CD4-positive, alpha-beta memory T cell (primary cell): ENCODE measurements at regions of chr10 and their contacts with region 1.

Region 1: DNA sequence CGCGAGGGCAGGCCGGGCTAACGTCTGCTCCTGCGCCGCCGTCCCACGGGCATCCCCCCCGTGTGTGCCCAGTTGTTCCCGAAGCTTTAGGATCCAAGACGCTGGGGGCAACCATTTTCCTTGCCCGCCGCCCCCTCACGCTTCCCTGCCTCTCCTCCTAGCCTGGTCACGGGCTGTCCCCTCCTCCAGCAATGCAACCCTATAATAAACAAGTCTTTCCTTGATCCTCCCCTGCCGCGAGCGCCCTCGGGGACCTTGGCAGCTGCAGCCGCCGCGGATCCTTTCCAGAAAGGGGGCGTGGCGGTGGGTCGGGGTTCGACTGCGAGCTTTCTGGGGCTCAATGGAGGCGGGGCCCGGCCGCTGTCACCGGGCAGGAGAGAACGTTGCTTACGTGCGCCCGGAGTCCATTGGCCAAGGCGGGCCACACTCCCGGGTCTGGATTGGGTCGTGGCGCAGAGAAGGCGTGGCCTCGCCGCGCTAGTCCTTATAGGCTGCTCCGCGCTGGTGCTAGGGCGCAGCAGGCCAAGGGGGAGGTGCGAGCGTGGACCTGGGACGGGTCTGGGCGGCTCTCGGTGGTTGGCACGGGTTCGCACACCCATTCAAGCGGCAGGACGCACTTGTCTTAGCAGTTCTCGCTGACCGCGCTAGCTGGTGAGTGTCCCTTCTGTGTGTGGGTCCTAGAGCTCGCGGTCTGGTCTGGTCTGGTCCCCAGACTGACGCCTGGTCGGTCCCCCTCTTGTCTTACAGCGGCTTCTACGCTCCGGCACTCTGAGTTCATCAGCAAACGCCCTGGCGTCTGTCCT is at the start of gene DDIT4:
- DNase-seq: peak; percentile 95 to 98 (median 96)
- H3K4me3 ChIP-seq: peak within 1 kb of the TSS; percentile 99 to 100
- H3K4me3 Mint-ChIP-seq: peak within 1 kb of the TSS; percentile 96 to 100 (median 98)
- H3K27ac ChIP-seq: peak within 1 kb of the TSS; percentile 99
- H3K27ac Mint-ChIP-seq: peak within 1 kb of the TSS; percentile 83 to 99 (median 96)
- H3K4me1 ChIP-seq: peaks cover 51% of the 10 kb centered on the region
- H3K4me1 Mint-ChIP-seq: peaks cover 23 to 60% (median 39%) of the 10 kb centered on the region in 4 donors
- H3K27me3 ChIP-seq: no peaks in the 10 kb centered on the region
- H3K27me3 Mint-ChIP-seq: no peaks in the 10 kb centered on the region
- total RNA-seq, gene DDIT4: 23.1 to 24.5 TPM

Region 2: GRCh38 chr10:72248468-72249151 is 25.0 kb before region 1 on chr10:
- CTCF ChIA-PET with region 1: interaction called, 16 read pairs
- POLR2A ChIA-PET with region 1: interaction called, 161 read pairs
- intact Hi-C with region 1: loop called (anchors 1 kb)
- DNase-seq: peak; percentile 85 to 90 (median 87)
- H3K4me3 ChIP-seq: peak overlapping the region; percentile 31 to 33
- H3K4me3 Mint-ChIP-seq: peak overlapping the region; percentile 83 to 92 (median 86)
- H3K27ac ChIP-seq: peak overlapping the region; percentile 55
- H3K27ac Mint-ChIP-seq: peak overlapping the region; percentile 95 to 98 (median 96)
- H3K4me1 ChIP-seq: peaks cover 96% of the 10 kb centered on the region
- H3K4me1 Mint-ChIP-seq: peaks cover 58 to 91% (median 77%) of the 10 kb centered on the region in 4 donors
- H3K27me3 ChIP-seq: no peaks in the 10 kb centered on the region
- H3K27me3 Mint-ChIP-seq: no peaks in the 10 kb centered on the region

Region 3: GRCh38 chr10:72260588-72261322 is 12.9 kb before region 1 on chr10:
- CTCF ChIA-PET with region 1: interaction called, 38 read pairs
- POLR2A ChIA-PET with region 1: interaction called, 161 read pairs
- intact Hi-C with region 1: loop called (anchors 1 kb)
- DNase-seq: peak; percentile 77 to 92 (median 80)
- H3K4me3 ChIP-seq: peak overlapping the region; percentile 52 to 90
- H3K4me3 Mint-ChIP-seq: peak overlapping the region; percentile 84 to 93 (median 89)
- H3K27ac ChIP-seq: peak overlapping the region; percentile 74
- H3K27ac Mint-ChIP-seq: peak overlapping the region; percentile 95 to 98 (median 96)
- H3K4me1 ChIP-seq: peaks cover 89% of the 10 kb centered on the region
- H3K4me1 Mint-ChIP-seq: peaks cover 49 to 77% (median 63%) of the 10 kb centered on the region in 4 donors
- H3K27me3 ChIP-seq: no peaks in the 10 kb centered on the region
- H3K27me3 Mint-ChIP-seq: no peaks in the 10 kb centered on the region

Region 4: GRCh38 chr10:72292223-72292691 is 18.6 kb after region 1 on chr10:
- CTCF ChIA-PET with region 1: interaction called, 26 read pairs
- POLR2A ChIA-PET with region 1: interaction called, 104 read pairs
- intact Hi-C with region 1: loop called (anchors 1 kb)
- DNase-seq: peak in 2 of 5 donors; percentile 9 to 57
- H3K4me3 ChIP-seq: no peak overlapping the region
- H3K4me3 Mint-ChIP-seq: peak overlapping the region in 6 of 8 donors; percentile 7 to 70 (median 34)
- H3K27ac ChIP-seq: no peak overlapping the region
- H3K27ac Mint-ChIP-seq: peak overlapping the region; percentile 75 to 99 (median 88)
- H3K4me1 ChIP-seq: peaks cover 66% of the 10 kb centered on the region
- H3K4me1 Mint-ChIP-seq: peaks cover 41 to 67% (median 57%) of the 10 kb centered on the region in 4 donors
- H3K27me3 ChIP-seq: no peaks in the 10 kb centered on the region
- H3K27me3 Mint-ChIP-seq: no peaks in the 10 kb centered on the region

Region 5: DNA sequence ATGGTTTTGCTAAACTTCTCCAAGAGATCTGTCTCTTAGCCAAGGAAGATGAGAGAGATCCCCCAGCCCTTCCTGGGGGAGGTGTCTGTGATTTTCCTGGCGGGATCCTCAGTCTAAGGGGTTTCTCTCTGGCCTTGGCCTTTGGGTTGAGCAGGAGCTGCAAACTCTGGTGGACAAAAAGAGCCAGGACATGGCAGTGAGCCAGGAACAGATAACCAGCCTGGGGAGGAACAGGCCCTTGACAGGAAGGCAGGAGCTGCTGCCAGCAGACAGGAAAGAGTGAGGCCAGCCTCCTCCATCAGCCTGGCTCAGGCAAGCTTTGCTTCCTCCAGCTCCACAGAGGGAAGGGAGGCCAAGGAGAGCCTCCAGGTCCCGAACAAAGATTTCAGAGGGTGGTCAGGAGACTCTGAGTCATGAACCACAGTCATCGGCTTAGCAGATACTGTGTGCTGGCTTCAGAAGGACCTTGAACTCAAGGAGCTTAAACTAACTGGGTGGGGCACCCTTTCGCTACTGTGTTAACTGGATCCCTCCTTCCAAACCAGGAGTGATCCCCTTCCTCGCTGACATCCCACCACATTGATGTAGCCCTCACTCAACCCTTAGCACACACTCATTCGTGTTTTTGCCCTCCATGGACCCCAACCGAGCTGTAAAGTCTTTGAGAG is 34.8 kb after region 1 on chr10:
- CTCF ChIA-PET with region 1: interaction called, 6 read pairs
- POLR2A ChIA-PET with region 1: interaction called, 17 read pairs
- intact Hi-C with region 1: no loop called
- DNase-seq: no peak
- H3K4me3 ChIP-seq: no peak overlapping the region
- H3K4me3 Mint-ChIP-seq: peak overlapping the region in 3 of 8 donors; percentile 7 to 21 (median 12)
- H3K27ac ChIP-seq: no peak overlapping the region
- H3K27ac Mint-ChIP-seq: peak overlapping the region; percentile 58 to 88 (median 67)
- H3K4me1 ChIP-seq: peaks cover 65% of the 10 kb centered on the region
- H3K4me1 Mint-ChIP-seq: peaks cover 34 to 67% (median 51%) of the 10 kb centered on the region in 4 donors
- H3K27me3 ChIP-seq: no peaks in the 10 kb centered on the region
- H3K27me3 Mint-ChIP-seq: no peaks in the 10 kb centered on the region